Heart left ventricle (tissue), 16 donors: ENCODE measurements at regions of chr7 and their contacts with region 1.

Region 1: GRCh38 chr7:73366127-73366526 is 38.2 kb downstream of the FKBP6 start:
- DNase-seq: no peak
- ATAC-seq: no peak
- H3K4me3 ChIP-seq: no peak overlapping the region
- H3K27ac ChIP-seq: no peak overlapping the region
- H3K4me1 ChIP-seq: no peaks in the 10 kb centered on the region
- H3K27me3 ChIP-seq: no peaks in the 10 kb centered on the region
- CTCF ChIP-seq: no peak
- POLR2A ChIP-seq: no peak

Region 2: GRCh38 chr7:73316521-73316920 is 49.6 kb before region 1 on chr7:
- intact Hi-C with region 1: loop called in 1 of 10 experiments (anchors 5 kb)
- DNase-seq: no peak
- ATAC-seq: no peak
- H3K4me3 ChIP-seq: no peak overlapping the region
- H3K27ac ChIP-seq: no peak overlapping the region
- H3K4me1 ChIP-seq: no peaks in the 10 kb centered on the region
- H3K27me3 ChIP-seq: no peaks in the 10 kb centered on the region
- CTCF ChIP-seq: no peak
- POLR2A ChIP-seq: no peak

Region 3: GRCh38 chr7:73433924-73434700 is 68.0 kb after region 1 on chr7:
- intact Hi-C with region 1: no loop called
- DNase-seq: no peak
- ATAC-seq: peak in 1 of 4 donors; percentile 24
- H3K4me3 ChIP-seq: peak overlapping the region in 10 of 12 donors; percentile 25 to 57 (median 40)
- H3K27ac ChIP-seq: no peak overlapping the region
- H3K4me1 ChIP-seq: peaks cover 0 to 18% (median 2%) of the 10 kb centered on the region in 12 donors
- H3K27me3 ChIP-seq: peaks cover 0 to 34% (median 12%) of the 10 kb centered on the region in 9 donors
- CTCF ChIP-seq: no peak
- POLR2A ChIP-seq: no peak